CD8-positive, alpha-beta memory T cell (primary cell): ENCODE measurements at regions of chr17 and their contacts with region 1.

Region 1: DNA sequence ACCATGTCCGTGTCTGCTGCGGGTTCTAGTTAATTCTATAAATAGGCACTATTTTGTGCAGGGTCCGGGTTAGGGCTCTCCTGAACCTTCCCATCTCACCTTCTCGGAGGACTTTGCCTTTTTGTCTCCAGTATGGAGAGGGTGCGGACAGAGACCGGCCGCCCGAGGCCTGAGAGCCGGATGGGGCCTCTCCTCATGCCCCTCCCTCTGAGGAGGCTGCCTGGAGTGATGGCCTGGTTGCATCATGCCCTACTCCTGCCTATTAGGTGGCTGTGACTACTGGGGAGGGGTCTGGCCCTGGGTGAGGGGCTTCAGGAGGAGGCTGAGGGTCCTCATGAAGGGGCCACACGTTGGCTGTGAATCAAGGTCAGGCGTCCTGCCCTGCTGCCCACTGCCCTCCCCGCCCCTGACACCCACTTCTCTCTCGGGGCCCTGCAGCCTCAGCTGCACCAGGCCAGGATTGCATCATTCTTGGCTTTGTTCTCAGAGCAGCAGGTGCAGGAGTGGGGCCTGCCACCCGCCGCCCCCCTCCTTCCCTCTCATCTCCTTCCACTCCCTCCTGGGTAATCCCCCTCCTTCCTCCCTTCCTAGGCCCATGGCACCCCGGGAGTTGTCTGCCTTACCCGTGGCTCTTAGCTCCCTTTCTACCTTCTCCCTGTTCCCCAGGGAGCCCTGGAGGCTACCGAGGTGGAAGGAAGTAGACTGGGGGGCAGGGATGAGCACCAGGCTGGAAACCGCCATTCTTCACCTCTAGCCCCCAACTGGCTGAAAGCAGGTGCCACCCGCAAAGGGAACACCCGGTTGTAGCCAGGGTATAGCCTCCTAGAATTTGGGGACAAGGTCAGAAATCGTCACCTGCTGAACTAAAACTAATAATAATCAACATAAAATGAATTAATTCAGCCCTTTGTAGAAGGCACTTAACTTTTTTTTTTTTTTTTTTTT is 12.7 kb upstream of the ARHGAP23 start:
- DNase-seq: no peak
- H3K4me3 ChIP-seq: no peak overlapping the region
- H3K4me3 Mint-ChIP-seq: no peak overlapping the region
- H3K27ac ChIP-seq: no peak overlapping the region
- H3K27ac Mint-ChIP-seq: no peak overlapping the region
- H3K4me1 ChIP-seq: no peaks in the 10 kb centered on the region
- H3K4me1 Mint-ChIP-seq: peaks cover 0 to 4% (median 0%) of the 10 kb centered on the region in 3 donors
- H3K27me3 ChIP-seq: peaks cover 18% of the 10 kb centered on the region
- H3K27me3 Mint-ChIP-seq: peaks cover 31 to 56% of the 10 kb centered on the region in 2 donors

Region 2: DNA sequence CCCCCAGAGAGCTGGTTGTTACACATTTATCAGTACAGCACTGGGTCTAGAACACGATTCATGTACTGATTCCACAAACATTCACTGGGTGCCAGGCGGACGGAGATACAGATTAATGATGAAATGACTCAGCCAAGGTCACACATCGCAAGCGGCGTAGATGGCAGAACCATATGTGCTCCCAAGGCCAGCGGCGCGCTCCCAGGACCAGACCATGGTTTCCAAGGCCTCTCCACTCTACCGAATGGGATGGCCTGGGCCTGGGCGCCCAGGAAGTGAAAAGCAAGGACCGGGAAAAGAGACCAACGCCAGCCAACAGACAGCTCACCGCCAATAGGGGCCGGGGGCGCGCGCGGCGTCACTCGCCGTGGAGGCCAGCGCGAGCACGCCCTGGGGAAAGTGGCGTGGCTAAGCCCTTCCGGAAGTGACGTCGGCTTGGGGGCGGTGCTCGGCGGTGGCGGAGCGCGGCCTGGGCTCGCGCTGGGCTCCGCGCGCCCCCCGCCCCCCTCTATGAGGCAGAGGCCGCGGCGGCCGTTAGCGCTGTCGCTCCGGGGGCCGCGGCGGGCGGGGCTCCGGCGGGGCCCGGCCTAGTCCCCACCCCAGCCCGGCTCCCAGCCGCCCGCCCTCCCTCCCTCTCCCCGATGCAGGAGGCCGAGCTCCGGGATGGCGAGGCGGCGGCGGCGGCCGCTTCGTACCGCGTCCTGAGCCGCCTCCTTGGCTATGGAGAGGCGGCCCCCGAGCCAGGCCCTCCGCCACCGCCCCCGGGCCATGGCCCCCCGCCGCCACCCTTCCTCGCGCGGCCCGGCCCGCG is 63.9 kb before region 1 on chr17 and contains the start of gene SOCS7:
- CTCF ChIA-PET with region 1: interaction called, 145 read pairs
- POLR2A ChIA-PET with region 1: interaction called, 10 read pairs
- DNase-seq: peak; percentile 89 to 94 (median 91)
- H3K4me3 ChIP-seq: peak within 1 kb of the TSS; percentile 96
- H3K4me3 Mint-ChIP-seq: peak within 1 kb of the TSS; percentile 89 to 100 (median 95)
- H3K27ac ChIP-seq: peak within 1 kb of the TSS; percentile 81
- H3K27ac Mint-ChIP-seq: peak within 1 kb of the TSS; percentile 64 to 100 (median 98)
- H3K4me1 ChIP-seq: peaks cover 26% of the 10 kb centered on the region
- H3K4me1 Mint-ChIP-seq: peaks cover 34 to 51% (median 43%) of the 10 kb centered on the region in 3 donors
- H3K27me3 ChIP-seq: no peaks in the 10 kb centered on the region
- H3K27me3 Mint-ChIP-seq: no peaks in the 10 kb centered on the region
- total RNA-seq, gene SOCS7: 22.0 to 23.7 TPM

Region 3: DNA sequence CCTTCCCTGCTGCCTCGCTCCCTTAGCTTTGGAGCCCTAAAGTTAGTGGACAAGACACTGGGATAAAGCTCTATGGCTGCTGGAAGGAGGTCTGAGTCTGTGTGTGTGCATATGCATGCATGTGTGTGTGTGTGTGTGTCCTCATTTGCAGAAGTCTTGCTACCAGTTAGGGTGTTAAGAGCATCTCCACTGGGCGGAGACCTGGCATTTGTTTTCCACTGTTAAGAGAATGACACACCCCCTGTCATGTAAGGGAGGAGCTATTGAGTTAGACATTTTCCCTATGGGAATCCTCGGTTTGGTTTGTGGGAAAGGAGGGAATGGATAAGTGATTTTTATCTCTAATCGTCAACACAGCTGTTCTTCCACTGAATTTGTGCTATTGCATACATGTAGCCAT is 12.0 kb before region 1 on chr17:
- CTCF ChIA-PET with region 1: interaction called, 12 read pairs
- POLR2A ChIA-PET with region 1: no interaction called
- DNase-seq: no peak
- H3K4me3 ChIP-seq: no peak overlapping the region
- H3K4me3 Mint-ChIP-seq: no peak overlapping the region
- H3K27ac ChIP-seq: no peak overlapping the region
- H3K27ac Mint-ChIP-seq: no peak overlapping the region
- H3K4me1 ChIP-seq: no peaks in the 10 kb centered on the region
- H3K4me1 Mint-ChIP-seq: no peaks in the 10 kb centered on the region
- H3K27me3 ChIP-seq: no peaks in the 10 kb centered on the region
- H3K27me3 Mint-ChIP-seq: no peaks in the 10 kb centered on the region

Region 4: GRCh38 chr17:38451840-38452529 is 36.5 kb after region 1 on chr17:
- CTCF ChIA-PET with region 1: no interaction called
- POLR2A ChIA-PET with region 1: no interaction called
- DNase-seq: no peak
- H3K4me3 ChIP-seq: no peak overlapping the region
- H3K4me3 Mint-ChIP-seq: peak overlapping the region in 1 of 7 donors; percentile 73
- H3K27ac ChIP-seq: no peak overlapping the region
- H3K27ac Mint-ChIP-seq: peak overlapping the region in 1 of 8 donors; percentile 5
- H3K4me1 ChIP-seq: no peaks in the 10 kb centered on the region
- H3K4me1 Mint-ChIP-seq: peaks cover 15 to 21% (median 18%) of the 10 kb centered on the region in 3 donors
- H3K27me3 ChIP-seq: peaks cover 3% of the 10 kb centered on the region
- H3K27me3 Mint-ChIP-seq: peaks cover 35 to 58% of the 10 kb centered on the region in 2 donors

Region 5: DNA sequence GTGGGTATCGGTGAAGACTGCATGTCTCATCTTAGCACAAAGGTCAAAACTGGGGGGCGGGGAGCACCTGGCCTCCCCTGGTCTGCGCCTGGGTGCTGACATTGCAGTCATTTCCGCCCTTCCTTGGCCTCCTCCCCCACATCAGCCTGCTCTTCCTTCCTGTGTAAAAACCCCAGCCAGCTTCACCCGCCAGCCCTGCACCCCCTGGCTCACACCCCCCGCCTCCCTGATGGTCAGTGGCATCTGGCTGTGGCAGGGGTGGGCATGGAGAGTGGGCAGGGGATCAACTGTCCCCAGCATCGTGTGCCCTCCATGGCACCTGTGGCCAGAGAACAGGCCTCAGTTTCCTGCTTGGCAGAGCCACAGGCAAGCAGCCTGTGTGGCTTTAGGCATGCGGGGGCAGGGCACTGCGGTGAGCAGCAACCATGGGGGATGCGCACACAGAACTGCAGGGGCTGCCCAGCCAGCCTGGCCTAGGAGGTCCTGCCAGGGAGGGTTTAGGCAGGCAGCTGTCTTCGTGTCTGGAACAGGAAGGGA is 483.4 kb after region 1 on chr17:
- CTCF ChIA-PET with region 1: no interaction called
- POLR2A ChIA-PET with region 1: no interaction called
- DNase-seq: peak; percentile 73 to 92 (median 84)
- H3K4me3 ChIP-seq: peak overlapping the region; percentile 60
- H3K4me3 Mint-ChIP-seq: peak overlapping the region; percentile 51 to 92 (median 77)
- H3K27ac ChIP-seq: peak overlapping the region; percentile 66
- H3K27ac Mint-ChIP-seq: peak overlapping the region; percentile 93 to 99 (median 96)
- H3K4me1 ChIP-seq: peaks cover 84% of the 10 kb centered on the region
- H3K4me1 Mint-ChIP-seq: peaks cover 72 to 81% (median 78%) of the 10 kb centered on the region in 3 donors
- H3K27me3 ChIP-seq: no peaks in the 10 kb centered on the region
- H3K27me3 Mint-ChIP-seq: no peaks in the 10 kb centered on the region